Left ventricle myocardium superior (tissue), 1 donor: ENCODE measurements at regions of chr5 and their contacts with region 1.

Region 1: GRCh38 chr5:37896159-37896558 is 56.3 kb upstream of the GDNF start:
- DNase-seq: no peak
- ATAC-seq: no peak

Region 2: GRCh38 chr5:36459176-36460135 is 1436.7 kb before region 1 on chr5:
- intact Hi-C with region 1: no loop called
- DNase-seq: no peak
- ATAC-seq: no peak

Region 3: GRCh38 chr5:37792975-37793631 is 103.1 kb before region 1 on chr5:
- intact Hi-C with region 1: no loop called
- DNase-seq: no peak
- ATAC-seq: no peak

Region 4: GRCh38 chr5:37831821-37832534 is 64.2 kb before region 1 on chr5:
- intact Hi-C with region 1: no loop called
- DNase-seq: no peak
- ATAC-seq: no peak

Region 5: DNA sequence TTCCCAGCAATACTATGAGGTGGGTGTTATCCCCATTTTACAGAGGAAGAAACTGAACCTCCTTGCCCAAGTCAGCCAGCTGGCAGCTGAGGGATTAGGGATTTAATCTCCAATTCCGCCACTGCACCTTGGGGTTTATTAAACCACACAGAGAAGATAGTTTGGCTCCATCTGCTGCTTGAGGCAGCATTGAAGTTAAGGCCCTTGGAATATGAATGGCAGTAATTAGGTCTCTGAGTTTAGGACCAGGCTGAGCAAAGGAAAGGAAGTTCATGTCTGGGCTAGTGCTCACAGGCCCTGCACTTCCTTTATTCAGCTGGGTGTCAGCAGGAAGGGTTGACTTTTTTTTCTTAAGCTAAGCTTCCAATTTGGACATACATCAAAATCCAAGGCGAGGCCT is 30.6 kb after region 1 on chr5:
- intact Hi-C with region 1: loop called (anchors 1 kb)
- DNase-seq: no peak
- ATAC-seq: peak; percentile 30

Region 6: GRCh38 chr5:37940931-37941623 is 44.9 kb after region 1 on chr5:
- intact Hi-C with region 1: no loop called
- DNase-seq: no peak
- ATAC-seq: no peak